ENCODE measurements at regions of chr17 and their contacts with region 1.

Region 1: DNA sequence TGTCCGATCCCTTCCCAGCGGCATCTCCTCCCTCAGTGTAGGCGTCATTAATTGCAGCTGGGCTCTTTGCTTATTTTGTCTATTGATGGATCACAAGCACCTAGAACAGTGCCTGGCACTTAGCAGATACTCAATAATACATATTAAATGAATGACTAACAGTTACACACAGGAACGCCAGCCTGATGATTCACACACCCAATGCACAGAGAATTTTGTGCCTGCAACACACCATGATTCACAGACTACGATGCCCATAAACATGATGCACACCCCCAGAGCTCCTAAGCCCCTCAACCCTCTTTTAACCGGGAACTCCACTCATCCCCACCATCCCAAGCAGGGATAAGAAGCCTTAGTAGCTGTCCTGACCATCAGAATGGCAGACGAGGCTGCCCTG is 66.6 kb upstream of the TMEM97 start:
- DNase-seq: no peak
- CTCF ChIP-seq: no peak

Region 2: GRCh38 chr17:27805520-27806146 is 446.8 kb before region 1 on chr17:
- in situ Hi-C with region 1: loop called (anchors 25 kb)
- DNase-seq: peak; percentile 78
- CTCF ChIP-seq: peak; percentile 89

Region 3: GRCh38 chr17:28161311-28161710 is 91.1 kb before region 1 on chr17:
- in situ Hi-C with region 1: no loop called
- DNase-seq: no peak
- CTCF ChIP-seq: no peak

Region 4: DNA sequence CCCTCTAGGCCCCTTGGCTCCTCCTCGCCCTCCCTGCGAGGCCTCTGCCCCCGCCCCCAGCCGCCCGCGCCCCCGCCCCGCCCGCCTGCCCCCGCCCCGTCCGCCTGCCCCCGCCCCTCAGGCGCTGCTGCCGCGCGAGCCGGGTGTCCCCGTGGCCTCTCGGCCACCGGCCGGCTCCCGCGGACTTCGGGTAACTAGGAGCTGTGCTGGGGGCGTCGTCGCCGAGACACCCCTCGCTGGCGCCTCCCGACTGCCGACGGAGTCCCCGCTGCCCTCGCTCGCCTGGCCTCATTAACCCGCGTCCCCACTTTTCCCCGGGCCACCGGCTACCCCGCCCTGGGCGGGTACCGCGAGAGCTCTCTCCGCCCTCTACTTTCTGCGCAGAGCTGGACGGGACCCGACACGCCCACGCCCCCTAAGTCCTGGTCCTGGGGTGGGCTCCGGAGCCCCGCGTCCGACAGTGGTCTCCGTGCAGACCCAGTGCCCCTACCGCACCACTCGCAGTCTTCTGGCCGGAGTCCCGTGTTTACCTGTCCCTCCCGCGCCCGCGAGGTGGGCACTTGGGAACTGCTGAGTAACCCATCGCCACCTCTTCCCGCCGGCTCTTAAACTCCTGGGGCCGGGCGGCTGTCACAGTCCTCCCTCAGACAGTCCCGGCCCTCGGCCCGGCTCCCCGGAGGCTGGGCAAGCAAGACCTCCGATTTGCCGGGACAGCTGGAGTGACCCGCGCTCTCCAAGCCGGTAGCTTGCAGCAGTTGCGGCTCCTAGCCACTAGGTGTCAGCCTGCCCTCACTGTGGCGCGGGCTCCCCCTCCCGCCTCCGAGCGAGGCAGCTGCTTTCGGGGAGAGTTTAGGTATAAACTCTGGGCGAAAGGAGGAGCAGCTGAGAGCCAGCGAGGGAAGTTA is 474.0 kb after region 1 on chr17 and contains the start of gene TLCD1:
- in situ Hi-C with region 1: no loop called
- DNase-seq: peak; percentile 91
- CTCF ChIP-seq: peak; percentile 99